ENCODE measurements at regions of chr9 and their contacts with region 1.

Region 1: DNA sequence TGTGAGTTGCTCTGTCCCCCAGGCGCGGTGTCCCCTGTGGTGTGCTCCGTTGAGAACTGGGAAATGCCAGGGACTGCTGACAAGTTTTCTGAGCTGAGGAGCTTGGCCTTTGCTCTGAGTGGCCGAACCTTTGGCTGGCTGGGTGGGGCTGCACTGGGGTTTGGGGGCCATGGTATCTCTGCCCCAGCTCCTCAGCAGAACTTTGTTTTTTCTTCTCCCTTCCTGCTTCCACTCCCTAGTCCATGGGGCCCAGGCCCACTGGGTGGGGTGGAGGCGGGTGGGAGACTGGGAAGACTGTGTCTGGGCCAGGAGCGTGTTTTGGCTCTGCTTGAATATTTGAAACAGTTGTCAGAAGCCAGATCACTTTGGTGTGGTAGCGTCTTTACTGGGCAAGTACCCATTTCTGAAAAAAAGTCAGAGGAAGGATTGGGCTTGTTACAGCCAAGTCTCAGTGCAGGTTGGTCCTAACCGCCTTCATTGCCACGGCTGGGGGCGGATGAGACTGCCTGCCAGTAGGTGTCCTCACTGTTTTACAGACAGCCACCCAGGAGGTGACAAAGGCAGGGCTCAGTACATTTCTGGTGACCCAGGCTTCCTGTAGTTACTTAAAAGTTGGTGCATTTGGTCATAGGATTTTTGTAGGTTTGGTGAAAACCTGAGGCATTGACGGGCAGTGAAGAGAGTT is 92.7 kb downstream of the DAB2IP start:
- DNase-seq: no peak
- ATAC-seq: peak; percentile 63

Region 2: DNA sequence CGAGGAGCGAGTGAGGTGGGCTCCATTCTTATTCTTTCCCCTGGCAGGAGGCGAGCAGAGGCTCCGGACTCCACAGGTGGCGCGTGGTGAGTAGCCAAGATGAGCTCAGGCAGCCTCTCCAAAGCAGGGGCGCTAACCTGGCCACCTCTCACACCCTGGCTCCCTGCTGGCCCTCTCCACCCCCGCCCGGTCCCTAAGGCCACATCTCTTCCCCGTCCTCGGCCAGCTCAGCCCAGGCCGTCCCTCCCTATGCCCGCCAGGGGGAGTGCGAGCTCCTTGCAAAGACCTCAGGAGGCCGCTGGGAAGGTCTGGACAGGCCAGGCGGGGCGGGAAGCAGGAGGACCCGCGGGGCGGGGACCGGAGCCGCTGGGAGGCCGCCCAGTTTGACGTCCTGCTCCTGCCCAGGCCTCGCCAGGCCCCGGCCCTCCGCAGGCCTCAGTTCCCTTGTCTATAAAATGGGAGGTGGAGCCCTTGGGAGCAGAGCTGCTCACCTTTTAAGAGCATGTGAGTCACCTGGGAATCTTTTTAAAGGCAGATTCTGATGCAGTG is 198.2 kb before region 1 on chr9:
- intact Hi-C with region 1: loop called (anchors 5 kb)
- DNase-seq: peak; percentile 97
- ATAC-seq: peak; percentile 93

Region 3: GRCh38 chr9:121609845-121610570 is 134.1 kb before region 1 on chr9:
- intact Hi-C with region 1: no loop called
- DNase-seq: no peak
- ATAC-seq: peak; percentile 27

Region 4: GRCh38 chr9:121698627-121699570 is 45.2 kb before region 1 on chr9:
- intact Hi-C with region 1: loop called (anchors 2 kb)
- DNase-seq: peak; percentile 86
- ATAC-seq: peak; percentile 18

Region 5: GRCh38 chr9:121725008-121725775 is 19.0 kb before region 1 on chr9:
- intact Hi-C with region 1: loop called (anchors 2 kb)
- DNase-seq: peak; percentile 96
- ATAC-seq: peak; percentile 90

Region 6: GRCh38 chr9:121765021-121765950 is 21.1 kb after region 1 on chr9:
- intact Hi-C with region 1: loop called (anchors 2 kb)
- DNase-seq: peak; percentile 73
- ATAC-seq: peak; percentile 87

Region 7: DNA sequence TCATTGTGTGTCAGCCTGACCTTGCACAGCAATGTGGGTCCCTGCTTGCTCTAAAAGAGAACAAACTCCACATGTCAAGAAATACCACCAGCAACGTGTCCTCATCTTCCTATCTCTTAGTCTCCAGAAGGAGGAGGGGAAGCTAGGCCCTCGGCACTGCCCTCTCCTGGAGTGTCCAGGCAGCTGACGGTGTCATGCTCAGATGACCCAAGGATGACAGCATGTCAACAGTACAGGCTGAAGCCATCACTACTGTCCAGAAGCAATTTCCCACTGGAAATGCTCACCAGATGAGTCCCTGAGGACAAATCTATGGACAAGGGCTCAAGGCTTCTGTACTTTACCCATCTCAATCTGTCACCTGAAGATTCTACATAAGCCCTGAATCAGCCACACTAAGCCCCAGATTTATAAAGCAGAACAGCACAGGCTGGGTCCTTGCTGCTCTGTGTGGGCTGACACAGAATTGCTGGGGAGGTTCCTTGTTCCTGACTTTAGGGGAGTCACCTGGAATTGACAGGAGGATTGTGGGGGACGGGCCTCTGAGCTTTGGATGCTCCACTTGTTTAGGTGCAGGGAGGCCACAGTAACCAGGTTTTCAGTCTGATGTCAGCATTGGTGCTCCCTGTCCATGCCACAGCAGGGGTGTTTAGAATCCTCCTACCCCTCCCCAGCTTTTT is 117.5 kb after region 1 on chr9:
- intact Hi-C with region 1: loop called (anchors 5 kb)
- DNase-seq: no peak
- ATAC-seq: peak; percentile 73

Region 8: GRCh38 chr9:121963528-121963995 is 219.4 kb after region 1 on chr9:
- intact Hi-C with region 1: no loop called
- DNase-seq: no peak
- ATAC-seq: no peak

Region 9: DNA sequence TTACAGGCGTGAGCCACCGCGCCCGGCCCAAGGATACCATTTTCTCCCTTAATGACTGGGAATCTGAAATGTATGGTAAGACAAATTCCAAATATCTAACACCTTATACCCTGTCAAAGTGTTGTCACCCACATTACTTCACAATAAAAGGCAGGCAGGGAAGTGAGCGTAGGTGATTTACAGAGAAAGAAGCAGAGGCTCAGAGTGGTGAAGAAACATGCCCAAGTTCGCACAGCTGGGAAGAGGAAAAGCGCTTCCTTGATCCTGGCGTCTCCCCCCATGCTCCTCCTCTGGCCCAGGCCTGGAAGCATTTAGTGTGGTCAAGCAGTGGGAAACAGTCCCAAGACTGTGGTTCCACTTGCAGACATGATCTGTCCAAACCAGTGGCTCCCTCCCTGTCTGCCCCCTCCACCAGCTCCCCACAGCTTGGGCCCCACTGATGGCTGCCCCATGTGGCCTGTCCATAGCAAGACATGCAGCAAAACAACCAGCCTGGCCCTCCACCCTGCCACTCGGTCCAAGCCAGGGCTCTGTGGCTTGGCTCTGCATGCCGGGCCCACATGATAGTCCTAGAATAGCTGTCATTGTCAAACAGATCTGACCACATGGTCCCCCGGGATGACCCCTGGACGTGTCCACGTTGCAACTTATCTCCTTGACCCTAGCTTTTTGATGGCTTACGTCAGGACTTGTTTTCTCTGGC is 241.8 kb after region 1 on chr9:
- intact Hi-C with region 1: loop called (anchors 1 kb)
- DNase-seq: peak; percentile 76
- ATAC-seq: peak; percentile 80

Measured in Right ventricle myocardium inferior (tissue), 1 donor.